ENCODE measurements at regions of chr6 and their contacts with region 1.

Region 1: GRCh38 chr6:158595223-158595622 is 35.3 kb downstream of the TMEM181 start:
- DNase-seq: no peak
- ATAC-seq: peak; percentile 39
- H3K4me3 Mint-ChIP-seq: no peak overlapping the region
- H3K27ac Mint-ChIP-seq: no peak overlapping the region
- H3K4me1 Mint-ChIP-seq: peaks cover 1% of the 10 kb centered on the region
- H3K27me3 Mint-ChIP-seq: no peaks in the 10 kb centered on the region
- CTCF ChIP-seq: peak; percentile 17

Region 2: GRCh38 chr6:158605266-158605878 is 10.1 kb after region 1 on chr6:
- CTCF ChIA-PET with region 1: interaction called, 17 read pairs
- POLR2A ChIA-PET with region 1: no interaction called
- intact Hi-C with region 1: no loop called
- DNase-seq: peak; percentile 75
- ATAC-seq: peak; percentile 80
- H3K4me3 Mint-ChIP-seq: no peak overlapping the region
- H3K27ac Mint-ChIP-seq: no peak overlapping the region
- H3K4me1 Mint-ChIP-seq: no peaks in the 10 kb centered on the region
- H3K27me3 Mint-ChIP-seq: no peaks in the 10 kb centered on the region
- CTCF ChIP-seq: peak; percentile 85

Region 3: GRCh38 chr6:158621694-158622544 is 26.7 kb after region 1 on chr6:
- CTCF ChIA-PET with region 1: no interaction called
- POLR2A ChIA-PET with region 1: no interaction called
- intact Hi-C with region 1: no loop called
- DNase-seq: no peak
- ATAC-seq: no peak
- H3K4me3 Mint-ChIP-seq: no peak overlapping the region
- H3K27ac Mint-ChIP-seq: no peak overlapping the region
- H3K4me1 Mint-ChIP-seq: peaks cover 8% of the 10 kb centered on the region
- H3K27me3 Mint-ChIP-seq: no peaks in the 10 kb centered on the region
- CTCF ChIP-seq: no peak